Posterior vena cava (tissue), 2 donors: ENCODE measurements at regions of chr1 and their contacts with region 1.

Region 1: DNA sequence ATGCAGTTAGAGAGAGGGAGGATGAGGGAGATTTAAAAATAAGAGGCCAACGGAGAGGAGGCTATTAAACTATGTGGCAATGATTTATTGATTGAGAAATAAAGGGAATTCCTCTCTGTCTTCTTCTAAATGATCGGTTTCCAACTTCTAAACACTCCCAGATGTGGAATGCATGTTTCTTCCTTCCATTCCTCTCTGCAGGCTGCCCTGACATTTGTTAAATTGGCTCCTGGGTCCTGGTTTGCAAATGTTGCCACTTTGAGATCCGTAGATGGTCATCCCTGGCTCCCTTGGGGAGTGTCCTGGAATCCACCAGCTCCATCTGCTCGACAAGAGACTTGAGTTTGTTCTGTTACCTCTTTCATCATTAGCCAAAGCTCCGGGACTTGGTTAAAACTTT is 10.3 kb upstream of the C1orf198 start:
- DNase-seq: peak; percentile 87

Region 2: GRCh38 chr1:229999004-229999670 is 879.5 kb before region 1 on chr1:
- intact Hi-C with region 1: loop called in 1 of 2 experiments (anchors 5 kb)
- DNase-seq: no peak

Region 3: GRCh38 chr1:230609208-230609607 is 269.4 kb before region 1 on chr1:
- intact Hi-C with region 1: no loop called
- DNase-seq: no peak

Region 4: GRCh38 chr1:230807029-230807428 is 71.6 kb before region 1 on chr1:
- intact Hi-C with region 1: no loop called
- DNase-seq: no peak

Region 5: GRCh38 chr1:230849451-230850224 is 29.0 kb before region 1 on chr1:
- intact Hi-C with region 1: no loop called
- DNase-seq: peak; percentile 90

Region 6: GRCh38 chr1:231387770-231388669 is 509.4 kb after region 1 on chr1:
- intact Hi-C with region 1: loop called in 1 of 2 experiments (anchors 5 kb)
- DNase-seq: no peak